CD8-positive, alpha-beta T cell (primary cell): ENCODE measurements at regions of chrX and their contacts with region 1.

Region 1: DNA sequence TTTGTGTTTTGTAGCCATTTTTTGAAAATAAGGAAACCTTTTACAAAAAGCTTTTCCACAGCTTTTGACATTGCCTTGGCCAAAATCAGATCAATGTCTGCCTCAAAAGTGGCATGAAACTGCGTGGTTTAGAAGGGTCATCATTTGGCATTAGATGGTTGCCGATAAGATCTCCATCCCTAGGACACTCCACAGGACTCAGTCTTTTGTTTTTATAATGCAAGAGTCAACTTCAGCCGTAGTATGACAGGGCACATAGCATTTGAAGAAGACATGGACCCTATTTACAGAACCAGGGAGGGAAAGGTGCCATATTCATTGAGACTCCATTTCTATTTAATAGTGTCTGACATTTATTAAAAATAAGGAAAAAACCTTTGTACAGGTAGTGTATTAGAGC is 1.3 kb downstream of the RTL8A start:
- DNase-seq: no peak
- ATAC-seq: no peak
- H3K4me3 ChIP-seq: no peak overlapping the region
- H3K4me3 Mint-ChIP-seq: peak overlapping the region; percentile 86
- H3K27ac ChIP-seq: no peak overlapping the region
- H3K27ac Mint-ChIP-seq: peak overlapping the region; percentile 71
- H3K4me1 ChIP-seq: peaks cover 15% of the 10 kb centered on the region
- H3K4me1 Mint-ChIP-seq: peaks cover 24% of the 10 kb centered on the region
- H3K27me3 ChIP-seq: no peaks in the 10 kb centered on the region
- H3K27me3 Mint-ChIP-seq: no peaks in the 10 kb centered on the region
- CTCF ChIP-seq: no peak

Region 2: DNA sequence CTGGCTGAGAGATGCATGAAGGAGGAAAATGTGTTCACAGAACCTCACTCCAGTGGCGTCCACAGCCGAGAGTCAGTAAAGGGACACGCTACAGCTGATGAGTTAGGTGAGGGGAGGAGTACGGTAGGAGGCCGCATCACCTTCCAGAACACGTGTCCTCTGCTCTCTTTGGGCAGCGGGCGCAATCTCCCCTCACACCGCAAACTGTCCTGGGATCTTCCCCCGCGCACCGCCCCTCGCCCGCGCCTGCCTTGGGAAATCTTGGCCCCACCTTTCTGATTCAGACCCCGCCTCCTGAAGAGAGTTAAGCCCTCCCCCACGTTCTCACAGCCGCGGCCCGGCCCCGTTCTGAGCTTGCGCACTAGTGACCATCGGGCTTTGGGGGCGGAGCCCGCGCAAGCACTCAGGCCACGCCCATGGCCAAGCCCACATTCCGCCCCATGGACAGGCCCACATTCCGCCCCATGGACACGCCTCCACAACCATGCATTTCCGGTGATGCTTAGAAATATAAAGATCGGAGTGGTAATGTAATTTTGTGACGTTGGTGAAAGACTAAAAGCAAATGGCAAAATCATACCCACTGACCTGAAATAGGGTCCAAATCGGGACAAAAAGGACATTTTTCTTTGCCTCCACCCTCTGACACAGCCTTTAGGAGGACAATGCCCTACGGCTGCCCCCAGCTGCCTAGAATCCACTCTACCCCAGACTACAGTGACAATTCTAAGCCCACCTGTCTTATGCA is 46.6 kb before region 1 on chrX:
- CTCF ChIA-PET with region 1: no interaction called
- POLR2A ChIA-PET with region 1: no interaction called
- intact Hi-C with region 1: loop called (anchors 1 to 5 kb)
- DNase-seq: peak; percentile 72 to 93 (median 89)
- ATAC-seq: peak; percentile 98
- H3K4me3 ChIP-seq: peak overlapping the region; percentile 52 to 57
- H3K4me3 Mint-ChIP-seq: peak overlapping the region; percentile 88
- H3K27ac ChIP-seq: peak overlapping the region; percentile 38 to 72
- H3K27ac Mint-ChIP-seq: peak overlapping the region; percentile 91
- H3K4me1 ChIP-seq: peaks cover 9% of the 10 kb centered on the region
- H3K4me1 Mint-ChIP-seq: peaks cover 12% of the 10 kb centered on the region
- H3K27me3 ChIP-seq: no peaks in the 10 kb centered on the region
- H3K27me3 Mint-ChIP-seq: no peaks in the 10 kb centered on the region
- CTCF ChIP-seq: no peak

Region 3: GRCh38 chrX:135009057-135009610 is 41.5 kb before region 1 on chrX:
- CTCF ChIA-PET with region 1: no interaction called
- POLR2A ChIA-PET with region 1: no interaction called
- intact Hi-C with region 1: loop called (anchors 1 to 5 kb)
- DNase-seq: no peak
- ATAC-seq: no peak
- H3K4me3 ChIP-seq: no peak overlapping the region
- H3K4me3 Mint-ChIP-seq: no peak overlapping the region
- H3K27ac ChIP-seq: no peak overlapping the region
- H3K27ac Mint-ChIP-seq: no peak overlapping the region
- H3K4me1 ChIP-seq: peaks cover 4% of the 10 kb centered on the region
- H3K4me1 Mint-ChIP-seq: peaks cover 6% of the 10 kb centered on the region
- H3K27me3 ChIP-seq: no peaks in the 10 kb centered on the region
- H3K27me3 Mint-ChIP-seq: no peaks in the 10 kb centered on the region
- CTCF ChIP-seq: no peak